Caco-2 (cell line): ENCODE measurements at regions of chr20 and their contacts with region 1.

Region 1: GRCh38 chr20:667391-667964 is 8.1 kb downstream of the SCRT2 start:
- DNase-seq: peak in 1 of 2 experiments; percentile 60
- H3K4me3 ChIP-seq: no peak overlapping the region
- H3K4me3 Mint-ChIP-seq: no peak overlapping the region
- H3K27ac Mint-ChIP-seq: no peak overlapping the region
- H3K4me1 ChIP-seq: no peaks in the 10 kb centered on the region
- H3K4me1 Mint-ChIP-seq: no peaks in the 10 kb centered on the region
- H3K27me3 ChIP-seq: no peaks in the 10 kb centered on the region
- H3K27me3 Mint-ChIP-seq: peaks cover 17% of the 10 kb centered on the region
- CTCF ChIP-seq: peak; percentile 67 to 85

Region 2: GRCh38 chr20:462199-462991 is 205.1 kb before region 1 on chr20 and contains the start of gene TBC1D20:
- CTCF ChIA-PET with region 1: no interaction called
- POLR2A ChIA-PET with region 1: interaction called, 11 read pairs
- intact Hi-C with region 1: no loop called
- DNase-seq: peak; percentile 84 to 91
- H3K4me3 ChIP-seq: peak within 1 kb of the TSS; percentile 74
- H3K4me3 Mint-ChIP-seq: peak within 1 kb of the TSS; percentile 98
- H3K27ac Mint-ChIP-seq: peak within 1 kb of the TSS; percentile 94
- H3K4me1 ChIP-seq: peaks cover 15% of the 10 kb centered on the region
- H3K4me1 Mint-ChIP-seq: peaks cover 15% of the 10 kb centered on the region
- H3K27me3 ChIP-seq: no peaks in the 10 kb centered on the region
- H3K27me3 Mint-ChIP-seq: no peaks in the 10 kb centered on the region
- CTCF ChIP-seq: no peak
- total RNA-seq, gene TBC1D20: 30.0 and 35.8 TPM in 2 replicates

Region 3: GRCh38 chr20:561437-562231 is 105.8 kb before region 1 on chr20:
- CTCF ChIA-PET with region 1: no interaction called
- POLR2A ChIA-PET with region 1: no interaction called
- intact Hi-C with region 1: loop called (anchors 1 kb)
- DNase-seq: peak; percentile 77 to 79
- H3K4me3 ChIP-seq: no peak overlapping the region
- H3K4me3 Mint-ChIP-seq: no peak overlapping the region
- H3K27ac Mint-ChIP-seq: no peak overlapping the region
- H3K4me1 ChIP-seq: no peaks in the 10 kb centered on the region; the same call in 1 of the 2 replicates
- H3K4me1 Mint-ChIP-seq: no peaks in the 10 kb centered on the region
- H3K27me3 ChIP-seq: no peaks in the 10 kb centered on the region
- H3K27me3 Mint-ChIP-seq: peaks cover 4% of the 10 kb centered on the region
- CTCF ChIP-seq: peak; percentile 96 to 97

Region 4: GRCh38 chr20:653110-653589 is 14.3 kb before region 1 on chr20 and contains the start of gene SRXN1:
- CTCF ChIA-PET with region 1: interaction called, 3 read pairs
- POLR2A ChIA-PET with region 1: interaction called, 3 read pairs
- intact Hi-C with region 1: loop called (anchors 1 kb)
- DNase-seq: peak; percentile 94 to 97
- H3K4me3 ChIP-seq: peak within 1 kb of the TSS; percentile 97
- H3K4me3 Mint-ChIP-seq: peak within 1 kb of the TSS; percentile 85
- H3K27ac Mint-ChIP-seq: peak within 1 kb of the TSS; percentile 80
- H3K4me1 ChIP-seq: peaks cover 6% of the 10 kb centered on the region; the same call in 1 of the 2 replicates
- H3K4me1 Mint-ChIP-seq: peaks cover 17% of the 10 kb centered on the region
- H3K27me3 ChIP-seq: no peaks in the 10 kb centered on the region
- H3K27me3 Mint-ChIP-seq: no peaks in the 10 kb centered on the region
- CTCF ChIP-seq: peak; percentile 60 to 66
- total RNA-seq, gene SRXN1: 32.5 and 33.7 TPM in 2 replicates

Region 5: GRCh38 chr20:728248-728944 is 60.9 kb after region 1 on chr20:
- CTCF ChIA-PET with region 1: no interaction called
- POLR2A ChIA-PET with region 1: no interaction called
- intact Hi-C with region 1: loop called (anchors 5 kb)
- DNase-seq: peak; percentile 71 to 86
- H3K4me3 ChIP-seq: peak overlapping the region; percentile 55
- H3K4me3 Mint-ChIP-seq: peak overlapping the region; percentile 70
- H3K27ac Mint-ChIP-seq: no peak overlapping the region
- H3K4me1 ChIP-seq: no peaks in the 10 kb centered on the region; the same call in 1 of the 2 replicates
- H3K4me1 Mint-ChIP-seq: no peaks in the 10 kb centered on the region
- H3K27me3 ChIP-seq: no peaks in the 10 kb centered on the region; the same call in 1 of the 2 replicates
- H3K27me3 Mint-ChIP-seq: peaks cover 33% of the 10 kb centered on the region
- CTCF ChIP-seq: peak; percentile 74 to 90